CD8-positive, alpha-beta T cell (primary cell): ENCODE measurements at regions of chr2 and their contacts with region 1.

Region 1: DNA sequence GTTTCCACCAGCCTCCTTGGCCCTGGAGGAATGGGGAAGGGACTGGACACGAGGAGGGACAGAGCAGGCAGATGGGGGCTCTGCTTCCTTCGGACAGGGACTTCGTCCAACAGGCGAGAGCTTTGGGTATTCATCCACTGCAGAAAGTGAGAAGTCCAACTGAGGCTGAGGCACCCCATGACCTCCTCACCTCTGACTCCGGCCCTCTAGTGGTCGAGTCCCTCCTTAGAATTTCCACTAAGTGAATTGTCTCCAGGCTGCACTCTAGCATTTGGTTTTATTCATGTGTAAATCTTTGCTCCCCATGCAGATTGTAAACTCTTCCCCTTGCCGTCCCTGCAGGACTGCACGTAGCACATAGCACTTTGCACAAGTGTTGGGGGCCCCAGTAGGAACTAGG is 75.6 kb downstream of the TMEM247 start:
- DNase-seq: peak in 6 of 9 experiments; percentile 44 to 65 (median 50)
- ATAC-seq: no peak
- H3K4me3 ChIP-seq: no peak overlapping the region
- H3K4me3 Mint-ChIP-seq: no peak overlapping the region
- H3K27ac ChIP-seq: no peak overlapping the region
- H3K27ac Mint-ChIP-seq: no peak overlapping the region
- H3K4me1 ChIP-seq: no peaks in the 10 kb centered on the region
- H3K4me1 Mint-ChIP-seq: peaks cover 36% of the 10 kb centered on the region
- H3K27me3 ChIP-seq: no peaks in the 10 kb centered on the region
- H3K27me3 Mint-ChIP-seq: no peaks in the 10 kb centered on the region
- CTCF ChIP-seq: peak; percentile 51

Region 2: GRCh38 chr2:46451131-46451711 is 103.8 kb before region 1 on chr2:
- CTCF ChIA-PET with region 1: no interaction called
- POLR2A ChIA-PET with region 1: no interaction called
- intact Hi-C with region 1: no loop called
- DNase-seq: no peak
- ATAC-seq: no peak
- H3K4me3 ChIP-seq: no peak overlapping the region
- H3K4me3 Mint-ChIP-seq: no peak overlapping the region
- H3K27ac ChIP-seq: no peak overlapping the region
- H3K27ac Mint-ChIP-seq: no peak overlapping the region
- H3K4me1 ChIP-seq: no peaks in the 10 kb centered on the region
- H3K4me1 Mint-ChIP-seq: no peaks in the 10 kb centered on the region
- H3K27me3 ChIP-seq: no peaks in the 10 kb centered on the region
- H3K27me3 Mint-ChIP-seq: no peaks in the 10 kb centered on the region
- CTCF ChIP-seq: no peak

Region 3: GRCh38 chr2:46525522-46526155 is 29.4 kb before region 1 on chr2:
- CTCF ChIA-PET with region 1: no interaction called
- POLR2A ChIA-PET with region 1: no interaction called
- intact Hi-C with region 1: no loop called
- DNase-seq: no peak
- ATAC-seq: no peak
- H3K4me3 ChIP-seq: no peak overlapping the region
- H3K4me3 Mint-ChIP-seq: no peak overlapping the region
- H3K27ac ChIP-seq: no peak overlapping the region
- H3K27ac Mint-ChIP-seq: no peak overlapping the region
- H3K4me1 ChIP-seq: no peaks in the 10 kb centered on the region
- H3K4me1 Mint-ChIP-seq: peaks cover 3% of the 10 kb centered on the region
- H3K27me3 ChIP-seq: no peaks in the 10 kb centered on the region
- H3K27me3 Mint-ChIP-seq: no peaks in the 10 kb centered on the region
- CTCF ChIP-seq: no peak

Region 4: GRCh38 chr2:46540496-46541331 is 14.3 kb before region 1 on chr2:
- CTCF ChIA-PET with region 1: interaction called, 12 read pairs
- POLR2A ChIA-PET with region 1: interaction called, 3 read pairs
- intact Hi-C with region 1: no loop called
- DNase-seq: no peak
- ATAC-seq: no peak
- H3K4me3 ChIP-seq: peak overlapping the region in 1 of 2 experiments; percentile 52
- H3K4me3 Mint-ChIP-seq: peak overlapping the region; percentile 89
- H3K27ac ChIP-seq: peak overlapping the region; percentile 69 to 88
- H3K27ac Mint-ChIP-seq: peak overlapping the region; percentile 94
- H3K4me1 ChIP-seq: peaks cover 58% of the 10 kb centered on the region
- H3K4me1 Mint-ChIP-seq: peaks cover 82% of the 10 kb centered on the region
- H3K27me3 ChIP-seq: no peaks in the 10 kb centered on the region
- H3K27me3 Mint-ChIP-seq: no peaks in the 10 kb centered on the region
- CTCF ChIP-seq: no peak

Region 5: DNA sequence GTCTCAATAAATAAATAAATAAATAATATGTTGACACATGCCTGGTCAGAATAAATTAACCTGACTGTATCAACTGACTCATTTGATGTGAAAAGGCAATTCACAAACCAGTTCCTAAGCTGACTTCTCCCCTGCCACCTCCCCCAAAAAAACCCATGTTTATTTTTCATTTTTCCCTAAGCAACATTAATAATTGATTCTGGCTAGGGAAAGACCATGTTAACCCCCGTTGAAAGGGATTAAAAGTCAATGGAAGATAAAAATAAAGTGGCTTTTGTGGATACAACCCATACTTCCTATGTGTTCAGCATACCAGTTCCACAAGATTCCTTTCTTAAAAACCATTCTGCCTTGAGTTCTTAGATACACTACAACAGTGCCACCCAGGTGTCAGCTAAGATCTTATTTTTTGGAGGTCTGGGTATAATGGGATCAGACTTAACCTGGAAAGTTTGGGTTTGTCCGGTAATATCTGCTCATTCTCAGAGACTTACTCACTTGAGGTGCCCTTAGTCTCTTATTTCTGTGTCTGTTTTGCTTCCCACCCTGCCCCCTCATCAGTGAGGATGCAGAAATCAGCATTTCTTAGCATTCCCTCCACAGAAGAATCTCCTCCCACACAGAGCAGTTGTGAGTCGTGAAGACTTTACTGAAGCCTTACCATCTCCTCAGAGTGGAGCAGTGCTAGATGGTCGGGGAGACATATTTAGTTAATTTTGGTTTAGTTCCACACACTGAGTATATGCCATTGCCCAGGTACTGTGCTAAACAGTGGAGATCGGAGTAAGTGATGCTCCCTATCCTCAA is 370.7 kb after region 1 on chr2:
- CTCF ChIA-PET with region 1: no interaction called
- POLR2A ChIA-PET with region 1: no interaction called
- intact Hi-C with region 1: no loop called
- DNase-seq: no peak
- ATAC-seq: no peak
- H3K4me3 ChIP-seq: no peak overlapping the region
- H3K4me3 Mint-ChIP-seq: no peak overlapping the region
- H3K27ac ChIP-seq: no peak overlapping the region
- H3K27ac Mint-ChIP-seq: no peak overlapping the region
- H3K4me1 ChIP-seq: peaks cover 22% of the 10 kb centered on the region
- H3K4me1 Mint-ChIP-seq: peaks cover 27% of the 10 kb centered on the region
- H3K27me3 ChIP-seq: no peaks in the 10 kb centered on the region
- H3K27me3 Mint-ChIP-seq: no peaks in the 10 kb centered on the region
- CTCF ChIP-seq: no peak